ENCODE measurements at regions of chr9 and their contacts with region 1.

Region 1: DNA sequence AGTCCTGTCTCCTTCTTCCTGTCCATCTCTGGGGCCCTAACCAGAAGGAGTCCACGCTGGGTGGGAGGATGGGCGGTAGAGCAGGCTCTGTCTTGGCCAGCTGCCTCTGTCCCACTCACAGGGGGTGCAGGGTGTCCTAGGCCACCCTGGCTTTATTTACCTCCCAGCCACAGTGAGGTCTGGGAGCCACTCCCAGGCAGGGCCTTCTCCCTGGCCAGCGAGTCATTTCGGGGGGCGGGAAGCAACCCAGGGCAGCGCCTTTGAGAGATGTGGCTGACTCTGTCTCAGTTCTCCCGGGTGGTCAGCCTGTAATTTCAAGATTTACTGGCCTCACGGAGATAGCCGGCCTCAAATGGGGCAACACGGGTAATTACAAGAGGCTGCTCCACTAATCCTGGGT is 67.4 kb upstream of the PTCH1 start:
- DNase-seq: no peak
- H3K4me3 ChIP-seq: no peak overlapping the region
- H3K4me3 Mint-ChIP-seq: no peak overlapping the region
- H3K27ac ChIP-seq: no peak overlapping the region
- H3K27ac Mint-ChIP-seq: no peak overlapping the region
- H3K4me1 ChIP-seq: no peaks in the 10 kb centered on the region
- H3K4me1 Mint-ChIP-seq: no peaks in the 10 kb centered on the region
- H3K27me3 ChIP-seq: no peaks in the 10 kb centered on the region
- H3K27me3 Mint-ChIP-seq: peaks cover 6 to 21% of the 10 kb centered on the region in 2 donors

Region 2: GRCh38 chr9:95533996-95534680 is 50.0 kb before region 1 on chr9:
- CTCF ChIA-PET with region 1: no interaction called
- POLR2A ChIA-PET with region 1: no interaction called
- DNase-seq: no peak
- H3K4me3 ChIP-seq: no peak overlapping the region
- H3K4me3 Mint-ChIP-seq: no peak overlapping the region
- H3K27ac ChIP-seq: no peak overlapping the region
- H3K27ac Mint-ChIP-seq: no peak overlapping the region
- H3K4me1 ChIP-seq: no peaks in the 10 kb centered on the region
- H3K4me1 Mint-ChIP-seq: no peaks in the 10 kb centered on the region
- H3K27me3 ChIP-seq: no peaks in the 10 kb centered on the region
- H3K27me3 Mint-ChIP-seq: peaks cover 5 to 39% of the 10 kb centered on the region in 2 donors

Region 3: DNA sequence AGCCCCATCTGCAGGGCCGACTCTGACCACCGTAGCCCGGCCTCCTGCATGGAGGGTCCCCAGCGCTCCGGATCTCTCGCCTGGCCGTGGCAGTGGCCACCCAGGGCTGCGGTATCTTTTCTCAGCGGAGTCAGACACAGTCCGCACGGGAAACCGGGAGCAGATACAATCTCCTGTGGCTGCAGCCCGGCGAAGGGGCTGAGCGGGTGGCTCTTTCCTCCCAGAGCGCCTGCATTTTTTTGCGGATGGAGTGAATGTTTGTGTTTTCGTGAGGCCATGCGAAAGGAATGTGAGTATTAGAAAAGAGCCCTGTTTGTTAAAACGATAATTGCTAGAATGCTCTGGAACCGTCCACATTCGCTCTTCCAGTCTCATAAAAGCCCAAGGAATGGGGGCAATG is 14.0 kb before region 1 on chr9:
- CTCF ChIA-PET with region 1: no interaction called
- POLR2A ChIA-PET with region 1: no interaction called
- DNase-seq: no peak
- H3K4me3 ChIP-seq: no peak overlapping the region
- H3K4me3 Mint-ChIP-seq: peak overlapping the region in 2 of 7 donors; percentile 20 to 44
- H3K27ac ChIP-seq: no peak overlapping the region
- H3K27ac Mint-ChIP-seq: no peak overlapping the region
- H3K4me1 ChIP-seq: peaks cover 4% of the 10 kb centered on the region
- H3K4me1 Mint-ChIP-seq: peaks cover 10 to 21% (median 17%) of the 10 kb centered on the region in 3 donors
- H3K27me3 ChIP-seq: peaks cover 16% of the 10 kb centered on the region
- H3K27me3 Mint-ChIP-seq: peaks cover 13 to 20% of the 10 kb centered on the region in 2 donors

Region 4: DNA sequence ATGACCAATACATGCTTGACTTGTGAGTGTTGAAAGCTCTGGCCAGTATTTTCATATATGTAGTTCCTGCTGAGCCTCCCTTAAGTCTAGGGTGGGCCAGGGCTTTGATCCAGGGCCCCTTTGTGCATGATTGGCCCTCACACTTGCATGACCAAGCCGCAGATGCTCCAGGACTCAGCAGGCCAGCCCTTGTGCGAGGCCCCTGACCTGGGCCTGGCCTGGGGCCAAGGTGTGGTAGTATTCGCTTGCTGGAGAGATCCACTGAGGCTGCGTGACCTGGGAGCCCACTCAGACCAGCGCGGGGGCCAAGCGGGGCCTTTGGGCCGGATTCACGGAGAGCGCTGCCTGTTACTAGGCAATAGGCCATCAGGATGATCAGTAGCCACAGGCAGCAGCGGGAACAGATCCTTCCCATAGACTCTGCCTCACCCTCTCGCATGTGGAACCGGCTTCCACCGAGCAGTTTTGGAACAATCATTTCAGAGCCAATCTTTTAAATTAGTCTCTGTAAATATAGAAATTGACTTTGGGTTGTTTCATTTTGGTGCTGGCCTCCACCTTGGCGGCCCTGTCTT is 11.6 kb after region 1 on chr9:
- CTCF ChIA-PET with region 1: no interaction called
- POLR2A ChIA-PET with region 1: no interaction called
- DNase-seq: no peak
- H3K4me3 ChIP-seq: no peak overlapping the region
- H3K4me3 Mint-ChIP-seq: no peak overlapping the region
- H3K27ac ChIP-seq: no peak overlapping the region
- H3K27ac Mint-ChIP-seq: no peak overlapping the region
- H3K4me1 ChIP-seq: no peaks in the 10 kb centered on the region
- H3K4me1 Mint-ChIP-seq: no peaks in the 10 kb centered on the region
- H3K27me3 ChIP-seq: no peaks in the 10 kb centered on the region
- H3K27me3 Mint-ChIP-seq: peaks cover 3 to 5% of the 10 kb centered on the region in 2 donors

Region 5: GRCh38 chr9:95744321-95744720 is 160.1 kb after region 1 on chr9:
- CTCF ChIA-PET with region 1: no interaction called
- POLR2A ChIA-PET with region 1: no interaction called
- DNase-seq: no peak
- H3K4me3 ChIP-seq: no peak overlapping the region
- H3K4me3 Mint-ChIP-seq: no peak overlapping the region
- H3K27ac ChIP-seq: no peak overlapping the region
- H3K27ac Mint-ChIP-seq: no peak overlapping the region
- H3K4me1 ChIP-seq: peaks cover under 1% of the 10 kb centered on the region
- H3K4me1 Mint-ChIP-seq: peaks cover 0 to 9% (median 4%) of the 10 kb centered on the region in 3 donors
- H3K27me3 ChIP-seq: no peaks in the 10 kb centered on the region
- H3K27me3 Mint-ChIP-seq: peaks cover 5 to 8% of the 10 kb centered on the region in 2 donors

Region 6: DNA sequence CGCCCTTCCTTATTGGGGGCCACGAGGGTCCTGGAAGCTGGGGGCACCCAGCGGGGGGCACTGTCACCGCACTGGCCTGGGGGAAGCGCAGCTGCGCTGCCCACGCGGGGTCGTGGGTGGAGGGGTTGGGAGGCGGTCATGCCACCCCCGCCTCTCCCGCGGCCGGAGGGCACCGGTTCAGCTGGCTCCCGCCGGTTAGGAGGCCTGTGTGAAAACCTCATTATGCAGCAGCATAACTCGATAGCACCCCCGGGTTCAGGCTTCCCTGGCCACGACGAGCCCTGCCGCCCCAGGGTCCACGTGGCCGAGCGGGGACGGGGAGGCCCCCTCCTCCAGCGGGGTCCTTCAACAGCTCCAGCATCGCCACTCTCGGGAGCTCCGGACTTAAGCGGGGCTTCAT is 200.1 kb after region 1 on chr9:
- CTCF ChIA-PET with region 1: no interaction called
- POLR2A ChIA-PET with region 1: interaction called, 15 read pairs
- DNase-seq: no peak
- H3K4me3 ChIP-seq: no peak overlapping the region
- H3K4me3 Mint-ChIP-seq: no peak overlapping the region
- H3K27ac ChIP-seq: no peak overlapping the region
- H3K27ac Mint-ChIP-seq: no peak overlapping the region
- H3K4me1 ChIP-seq: no peaks in the 10 kb centered on the region
- H3K4me1 Mint-ChIP-seq: no peaks in the 10 kb centered on the region
- H3K27me3 ChIP-seq: no peaks in the 10 kb centered on the region
- H3K27me3 Mint-ChIP-seq: peaks cover 4 to 5% of the 10 kb centered on the region in 2 donors

Measured in CD8-positive, alpha-beta memory T cell (primary cell).